Left colon (tissue), 2 donors: ENCODE measurements at regions of chr4 and their contacts with region 1.

Region 1: DNA sequence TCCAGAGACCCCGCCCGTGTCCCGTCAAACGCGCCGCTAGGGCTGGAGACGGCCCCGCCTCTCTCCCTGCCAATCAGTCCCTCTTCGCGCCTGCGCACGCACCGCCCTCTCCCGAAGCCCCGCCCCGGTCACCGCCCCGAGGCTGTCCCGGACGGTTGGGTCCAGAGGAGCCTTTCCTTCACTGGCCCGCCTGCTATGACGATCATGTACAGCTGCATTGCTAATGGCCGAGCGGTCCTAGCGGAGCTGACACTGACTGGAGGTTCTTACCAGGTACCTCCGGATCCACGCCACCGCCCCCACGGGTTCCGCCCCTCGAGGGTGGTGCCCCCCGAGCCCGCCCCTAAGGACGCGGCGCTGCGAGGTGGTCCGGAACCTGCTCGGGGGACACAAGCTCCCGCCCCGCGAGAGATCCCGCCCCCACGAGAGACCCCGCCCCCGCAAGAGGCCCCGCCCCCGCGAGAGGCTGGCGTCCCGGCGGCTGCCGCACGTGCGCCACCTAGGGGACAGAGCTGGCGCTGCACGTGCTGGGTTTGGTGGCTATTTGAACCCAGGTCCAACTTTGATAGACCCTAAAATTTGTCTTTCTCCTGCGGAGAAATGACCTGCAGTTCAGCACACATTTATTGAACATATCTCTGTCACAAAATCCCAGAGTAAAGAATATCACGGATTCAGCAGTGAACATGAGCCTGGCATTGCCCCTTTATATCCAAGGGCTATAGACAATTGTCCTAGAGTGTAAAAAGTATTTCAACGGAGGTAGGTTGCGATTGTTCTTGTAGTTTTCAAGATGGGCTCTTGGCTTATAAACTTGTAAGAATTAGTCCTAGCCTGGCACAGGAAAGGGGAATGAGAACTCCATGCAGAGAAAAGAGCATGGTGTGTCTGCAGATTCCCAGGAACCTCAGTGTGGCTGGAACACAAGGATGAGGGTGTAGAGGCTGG is 88.7 kb downstream of the HNRNPD start:
- DNase-seq: peak; percentile 98 to 100
- ATAC-seq: peak; percentile 98

Region 2: DNA sequence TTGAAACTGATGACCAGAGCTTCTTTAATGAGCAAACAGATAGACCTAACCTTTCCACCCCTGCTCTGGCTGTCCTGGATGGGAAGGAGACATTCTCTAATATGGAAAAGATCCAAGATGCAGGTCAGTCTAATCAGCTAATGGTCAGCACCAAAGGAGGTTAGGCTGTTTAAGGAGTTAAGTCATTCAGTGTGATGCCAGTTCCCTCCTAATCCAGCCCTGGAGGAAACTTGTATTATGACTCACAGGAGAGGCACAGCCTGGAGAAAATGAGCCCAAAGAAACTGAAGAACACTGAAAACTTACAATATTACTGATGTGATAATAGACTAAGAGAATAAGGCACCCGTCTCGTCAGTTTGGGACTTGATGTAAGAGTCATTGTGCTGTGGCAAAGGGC is 234.3 kb before region 1 on chr4:
- intact Hi-C with region 1: no loop called
- DNase-seq: no peak
- ATAC-seq: no peak

Region 3: DNA sequence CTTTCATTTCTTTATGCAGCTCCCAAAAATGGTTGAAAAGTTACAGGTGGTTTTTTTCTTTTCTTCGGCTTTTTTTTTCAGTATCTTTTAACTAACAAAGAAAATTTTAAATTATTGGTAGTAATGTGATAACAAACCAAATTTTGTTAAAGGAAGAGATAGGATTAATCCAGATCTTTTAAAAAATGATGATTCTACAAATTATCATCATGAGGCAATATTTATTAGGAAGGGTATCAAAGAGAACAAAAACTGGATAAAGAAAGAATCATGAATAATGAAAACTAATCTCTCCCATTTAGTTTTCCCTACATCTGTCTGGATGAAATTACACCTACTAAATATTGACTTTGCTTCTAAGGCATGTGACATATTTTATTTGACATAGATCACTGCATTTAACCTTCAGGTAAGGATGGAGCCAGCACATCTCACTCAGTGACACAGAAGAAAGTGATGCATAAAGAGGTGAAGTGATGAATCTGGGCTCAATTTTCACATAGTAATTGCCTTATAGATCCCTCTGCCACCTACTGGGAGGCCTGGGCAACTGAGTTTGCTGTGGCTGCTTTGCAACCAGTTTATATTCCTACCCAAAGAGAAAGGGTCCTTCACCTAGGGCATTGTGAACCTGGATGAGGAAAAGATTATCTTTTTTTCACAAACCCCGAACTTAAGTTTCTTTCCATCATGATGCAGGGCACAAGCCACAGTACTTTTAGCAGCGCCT is 67.0 kb before region 1 on chr4:
- intact Hi-C with region 1: no loop called
- DNase-seq: no peak
- ATAC-seq: no peak

Region 4: GRCh38 chr4:82230306-82230705 is 54.8 kb before region 1 on chr4:
- intact Hi-C with region 1: no loop called
- DNase-seq: no peak
- ATAC-seq: no peak

Region 5: DNA sequence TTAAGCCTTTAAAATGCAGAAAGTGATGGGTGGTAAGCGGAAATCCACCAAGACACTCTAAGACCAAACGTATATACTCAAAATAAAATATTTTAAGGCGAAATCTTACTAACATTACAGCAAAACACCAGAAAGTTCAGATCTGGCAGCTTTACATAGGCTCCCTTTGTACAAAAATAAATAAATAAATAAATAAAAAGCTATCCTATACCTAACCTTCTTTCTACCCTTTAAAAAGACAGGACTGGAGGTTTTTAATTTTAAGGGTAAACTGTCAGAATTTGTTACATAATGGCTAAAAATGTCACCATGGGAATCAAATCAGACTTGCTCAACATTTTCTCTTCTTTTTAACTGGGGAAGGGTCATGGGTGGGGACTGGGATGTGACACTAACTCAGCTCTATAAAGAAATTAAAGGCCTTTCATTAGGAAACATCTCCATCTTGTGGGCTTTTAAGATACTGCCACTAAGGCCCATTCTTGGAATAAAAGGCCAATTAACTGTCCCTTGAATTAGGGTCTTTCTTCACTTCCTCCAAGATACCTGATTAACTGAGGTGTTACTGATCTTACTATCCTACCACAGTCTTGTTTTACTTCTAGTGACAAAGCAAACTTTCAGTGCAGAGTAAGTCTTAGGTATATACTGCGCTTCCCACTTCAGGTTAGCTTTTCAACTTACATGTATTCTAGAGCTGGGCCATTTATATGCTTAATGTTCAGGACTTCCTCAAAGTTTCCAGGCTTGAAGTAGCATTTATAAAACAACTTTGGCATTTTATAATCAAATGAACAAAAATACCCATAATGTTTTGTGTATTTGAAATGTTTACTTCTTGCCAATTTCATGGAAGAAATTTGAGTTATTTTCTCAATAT is 75.4 kb after region 1 on chr4:
- intact Hi-C with region 1: loop called in 1 of 2 experiments (anchors 10 kb)
- DNase-seq: no peak
- ATAC-seq: peak; percentile 37